Activated CD4-positive, alpha-beta T cell treated with anti-CD3 and anti-CD28 coated beads for 36 hours (primary cell): ENCODE measurements at regions of chr3 and their contacts with region 1.

Region 1: GRCh38 chr3:15205934-15206661 is at the start of gene CAPN7:
- DNase-seq: peak; percentile 94
- ATAC-seq: peak; percentile 86
- H3K4me3 Mint-ChIP-seq: peak within 1 kb of the TSS; percentile 85
- H3K27ac Mint-ChIP-seq: peak within 1 kb of the TSS; percentile 93
- H3K4me1 Mint-ChIP-seq: peaks cover 23% of the 10 kb centered on the region
- H3K27me3 Mint-ChIP-seq: no peaks in the 10 kb centered on the region
- total RNA-seq, gene CAPN7: 18.4 to 20.4 TPM

Region 2: GRCh38 chr3:14947886-14948555 is 258.1 kb before region 1 on chr3:
- CTCF ChIA-PET with region 1: no interaction called
- POLR2A ChIA-PET with region 1: no interaction called
- intact Hi-C with region 1: loop called in 1 of 2 experiments (anchors 1 kb)
- DNase-seq: peak; percentile 97
- ATAC-seq: peak; percentile 97
- H3K4me3 Mint-ChIP-seq: peak overlapping the region; percentile 91
- H3K27ac Mint-ChIP-seq: peak overlapping the region; percentile 98
- H3K4me1 Mint-ChIP-seq: peaks cover 49% of the 10 kb centered on the region
- H3K27me3 Mint-ChIP-seq: no peaks in the 10 kb centered on the region

Region 3: GRCh38 chr3:15108082-15108545 is 98.0 kb before region 1 on chr3:
- CTCF ChIA-PET with region 1: interaction called, 24 read pairs
- POLR2A ChIA-PET with region 1: no interaction called
- intact Hi-C with region 1: loop called in 1 of 2 experiments (anchors 2 kb)
- DNase-seq: peak; percentile 86
- ATAC-seq: peak; percentile 96
- H3K4me3 Mint-ChIP-seq: no peak overlapping the region
- H3K27ac Mint-ChIP-seq: no peak overlapping the region
- H3K4me1 Mint-ChIP-seq: no peaks in the 10 kb centered on the region
- H3K27me3 Mint-ChIP-seq: peaks cover 3% of the 10 kb centered on the region

Region 4: DNA sequence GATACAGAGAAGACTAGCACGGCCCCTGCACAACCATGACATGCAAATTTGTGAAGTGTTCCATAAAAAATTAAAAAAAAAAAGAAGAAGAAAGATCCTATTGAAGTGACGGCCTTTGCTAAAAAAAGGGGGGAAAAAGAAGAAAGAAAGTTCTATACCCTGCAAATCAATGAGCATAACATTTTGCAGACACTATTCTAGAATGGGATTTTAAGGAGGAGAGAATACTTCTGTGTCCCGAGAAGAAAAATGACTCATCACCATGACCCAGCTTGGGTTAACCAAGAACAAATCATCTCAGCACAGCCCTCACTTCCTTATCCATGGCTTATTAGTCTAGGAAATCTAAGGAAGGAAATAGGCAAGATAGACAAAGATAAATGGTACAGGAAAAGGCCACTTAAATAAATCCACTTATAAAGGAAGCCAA is 133.7 kb after region 1 on chr3:
- CTCF ChIA-PET with region 1: no interaction called
- POLR2A ChIA-PET with region 1: no interaction called
- intact Hi-C with region 1: no loop called
- DNase-seq: no peak
- ATAC-seq: no peak
- H3K4me3 Mint-ChIP-seq: no peak overlapping the region
- H3K27ac Mint-ChIP-seq: no peak overlapping the region
- H3K4me1 Mint-ChIP-seq: peaks cover 5% of the 10 kb centered on the region
- H3K27me3 Mint-ChIP-seq: no peaks in the 10 kb centered on the region

Region 5: DNA sequence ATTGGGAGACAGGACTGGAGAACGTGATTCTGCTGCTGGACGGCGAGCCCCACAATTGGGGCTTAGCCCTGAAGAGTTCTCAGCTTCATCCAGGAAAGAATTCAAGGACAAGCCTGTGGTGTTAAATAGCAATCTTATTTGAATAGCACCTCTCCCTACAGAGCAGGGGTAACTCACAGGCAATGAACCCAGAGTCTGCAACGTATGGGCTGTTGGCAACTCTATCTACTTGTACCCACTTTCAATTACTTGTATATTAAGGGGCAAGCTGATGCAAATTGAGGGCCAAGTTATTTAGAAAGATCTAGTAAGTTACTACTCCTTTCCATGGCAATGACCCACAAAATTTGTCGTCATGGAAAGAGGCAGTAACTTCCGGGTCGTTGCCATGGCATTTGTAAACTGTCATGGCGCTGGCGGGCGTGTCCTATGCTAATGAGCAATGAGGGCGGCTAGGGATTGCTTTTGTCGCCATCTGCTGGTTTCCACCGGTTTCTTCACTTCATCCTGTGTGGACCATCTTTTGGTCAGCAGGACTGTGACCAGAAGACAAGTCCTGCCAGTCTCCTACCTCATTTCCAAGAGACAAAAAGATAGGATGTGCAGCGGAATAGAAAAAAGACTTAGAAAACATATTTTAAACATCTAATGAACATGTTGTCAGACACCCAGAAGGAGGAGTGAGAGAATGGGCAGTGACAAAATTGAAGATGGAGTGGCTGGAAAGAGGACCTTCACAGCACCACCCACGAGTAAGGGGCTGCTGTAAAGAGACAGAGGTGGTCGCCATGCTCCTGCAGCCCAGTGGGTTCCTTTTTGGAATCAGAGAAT is 172.1 kb after region 1 on chr3:
- CTCF ChIA-PET with region 1: interaction called, 14 read pairs
- POLR2A ChIA-PET with region 1: interaction called, 3 read pairs
- intact Hi-C with region 1: loop called (anchors 1 kb)
- DNase-seq: peak; percentile 96
- ATAC-seq: peak; percentile 96
- H3K4me3 Mint-ChIP-seq: no peak overlapping the region
- H3K27ac Mint-ChIP-seq: peak overlapping the region; percentile 73
- H3K4me1 Mint-ChIP-seq: peaks cover 6% of the 10 kb centered on the region
- H3K27me3 Mint-ChIP-seq: no peaks in the 10 kb centered on the region

Region 6: GRCh38 chr3:15427182-15427880 is 221.2 kb after region 1 on chr3 and contains the starts of genes EAF1 and METTL6:
- CTCF ChIA-PET with region 1: interaction called, 9 read pairs
- POLR2A ChIA-PET with region 1: no interaction called
- intact Hi-C with region 1: loop called (anchors 1 kb)
- DNase-seq: peak; percentile 92
- ATAC-seq: peak; percentile 83
- H3K4me3 Mint-ChIP-seq: peak within 1 kb of the TSS; percentile 90
- H3K27ac Mint-ChIP-seq: peak within 1 kb of the TSS; percentile 97
- H3K4me1 Mint-ChIP-seq: peaks cover 45% of the 10 kb centered on the region
- H3K27me3 Mint-ChIP-seq: no peaks in the 10 kb centered on the region
- total RNA-seq, gene EAF1: 21.2 to 25.6 TPM
- total RNA-seq, gene METTL6: 13.0 to 19.5 TPM

Region 7: DNA sequence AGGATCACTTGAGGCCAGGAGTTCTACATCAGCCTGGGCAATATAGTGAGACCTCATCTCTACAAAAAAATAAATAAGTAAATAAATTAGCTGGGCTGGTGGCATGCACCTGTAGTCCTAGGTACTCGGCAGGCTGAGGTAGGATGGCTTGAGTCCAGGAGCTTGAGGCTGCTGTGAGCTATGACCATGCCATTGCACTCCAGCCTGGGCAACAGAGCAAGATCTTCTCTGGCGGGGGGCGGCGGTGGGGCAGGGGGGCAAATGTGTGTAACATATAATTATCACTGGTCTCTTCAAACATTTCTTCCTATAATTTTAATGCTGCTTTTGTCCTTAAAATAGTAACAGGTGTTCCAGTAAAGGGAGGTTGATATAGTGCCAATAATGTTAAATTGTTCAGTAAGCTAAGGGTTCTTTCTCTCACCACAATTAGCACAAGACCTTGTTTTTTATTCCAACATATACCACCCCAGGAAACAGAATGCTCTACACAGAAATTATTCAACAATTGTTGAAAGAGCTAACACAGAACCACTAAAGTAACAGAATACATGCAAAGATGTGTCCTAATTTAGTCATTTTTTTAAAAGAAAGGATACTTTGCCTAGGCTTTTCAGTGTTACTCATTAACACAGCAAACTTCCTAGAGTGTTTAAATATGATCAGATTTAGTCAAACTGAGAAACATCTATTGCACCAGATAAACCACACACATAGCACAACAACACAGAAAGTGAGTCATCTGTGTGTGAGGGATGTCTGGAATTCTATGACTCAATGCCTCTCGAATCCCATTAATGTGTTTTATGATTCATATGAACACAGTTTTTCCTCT is 562.5 kb after region 1 on chr3:
- CTCF ChIA-PET with region 1: no interaction called
- POLR2A ChIA-PET with region 1: no interaction called
- intact Hi-C with region 1: no loop called
- DNase-seq: no peak
- ATAC-seq: peak; percentile 93
- H3K4me3 Mint-ChIP-seq: no peak overlapping the region
- H3K27ac Mint-ChIP-seq: peak overlapping the region; percentile 82
- H3K4me1 Mint-ChIP-seq: peaks cover 42% of the 10 kb centered on the region
- H3K27me3 Mint-ChIP-seq: no peaks in the 10 kb centered on the region

Region 8: GRCh38 chr3:15815696-15816095 is 609.6 kb after region 1 on chr3:
- CTCF ChIA-PET with region 1: interaction called, 3 read pairs
- POLR2A ChIA-PET with region 1: no interaction called
- intact Hi-C with region 1: loop called in 1 of 2 experiments (anchors 10 kb)
- DNase-seq: no peak
- ATAC-seq: no peak
- H3K4me3 Mint-ChIP-seq: no peak overlapping the region
- H3K27ac Mint-ChIP-seq: no peak overlapping the region
- H3K4me1 Mint-ChIP-seq: peaks cover 41% of the 10 kb centered on the region
- H3K27me3 Mint-ChIP-seq: no peaks in the 10 kb centered on the region

Region 9: DNA sequence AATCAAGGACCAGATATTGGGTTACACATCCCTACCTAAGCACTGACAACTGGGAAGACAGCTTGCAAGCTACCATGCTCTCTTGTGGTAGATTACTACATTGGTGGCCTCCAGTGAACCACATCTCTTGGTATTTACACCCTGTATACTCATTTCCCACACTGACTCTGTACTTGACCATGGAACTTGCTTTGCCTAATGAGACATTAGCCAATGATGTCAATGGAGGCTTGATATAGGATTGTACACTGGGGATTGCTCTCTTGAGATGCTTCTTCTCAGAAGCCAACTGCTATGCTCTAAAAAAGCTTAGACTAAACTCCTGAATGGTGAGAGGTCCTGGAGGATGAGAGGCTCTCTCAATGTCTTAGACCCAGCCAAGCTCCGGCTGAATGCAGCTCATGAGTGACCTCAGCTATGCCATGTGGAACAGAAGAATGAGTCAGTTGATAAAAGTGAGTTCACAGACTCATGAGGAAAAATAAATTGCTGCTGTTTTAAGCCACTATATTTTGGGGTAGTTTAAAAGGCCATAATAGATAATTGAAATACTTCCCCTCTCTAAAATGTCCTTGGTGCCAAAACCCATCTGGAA is 906.9 kb after region 1 on chr3:
- CTCF ChIA-PET with region 1: no interaction called
- POLR2A ChIA-PET with region 1: no interaction called
- intact Hi-C with region 1: no loop called
- DNase-seq: no peak
- ATAC-seq: no peak
- H3K4me3 Mint-ChIP-seq: no peak overlapping the region
- H3K27ac Mint-ChIP-seq: no peak overlapping the region
- H3K4me1 Mint-ChIP-seq: no peaks in the 10 kb centered on the region
- H3K27me3 Mint-ChIP-seq: no peaks in the 10 kb centered on the region